Activated CD4-positive, alpha-beta T cell treated with anti-CD3 and anti-CD28 coated beads, Interleukin-2, amount 10 ng/mL, durations not matched to agents 24 days and 14 days (primary cell): ENCODE measurements at regions of chr5 and their contacts with region 1.

Region 1: DNA sequence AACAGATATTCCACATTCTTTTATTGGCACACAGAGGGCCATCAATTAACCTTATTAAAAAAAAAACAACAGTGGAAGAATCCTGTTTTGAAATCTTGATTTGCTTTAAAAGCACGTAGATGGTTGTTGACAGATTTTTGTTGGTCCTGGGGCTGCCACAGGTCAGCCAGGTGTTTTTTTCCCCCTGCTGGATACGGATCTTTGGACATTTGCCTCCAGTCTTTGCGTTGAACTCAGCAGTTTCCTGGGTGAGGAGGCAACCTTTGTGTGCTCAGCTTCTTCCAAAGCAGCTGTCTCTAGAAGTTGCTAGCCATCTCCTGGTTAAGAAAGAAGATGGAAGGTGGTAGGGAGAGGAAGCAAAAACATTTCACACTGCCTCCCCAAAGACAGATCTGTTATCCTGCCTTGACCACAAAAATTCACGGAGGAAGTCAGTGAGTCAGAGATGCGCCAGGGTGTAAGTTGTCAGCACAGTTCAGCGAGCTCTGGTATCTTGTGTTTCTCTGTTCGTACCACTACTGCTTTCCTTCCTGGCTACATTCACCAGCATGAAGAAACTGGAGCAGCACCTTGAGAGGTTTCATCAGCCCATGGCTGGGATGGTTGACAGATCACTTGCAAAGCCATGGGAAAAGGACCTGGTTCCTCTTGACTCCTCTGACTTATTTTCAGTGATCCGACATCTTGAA is 207.3 kb downstream of the ARHGAP26 start:
- DNase-seq: peak; percentile 85
- H3K4me3 Mint-ChIP-seq: peak overlapping the region; percentile 78
- H3K27ac Mint-ChIP-seq: peak overlapping the region; percentile 91
- H3K4me1 Mint-ChIP-seq: peaks cover 55% of the 10 kb centered on the region
- H3K27me3 Mint-ChIP-seq: no peaks in the 10 kb centered on the region

Region 2: GRCh38 chr5:142888469-142889085 is 88.9 kb before region 1 on chr5:
- intact Hi-C with region 1: no loop called
- DNase-seq: peak; percentile 69
- H3K4me3 Mint-ChIP-seq: no peak overlapping the region
- H3K27ac Mint-ChIP-seq: no peak overlapping the region
- H3K4me1 Mint-ChIP-seq: peaks cover 7% of the 10 kb centered on the region
- H3K27me3 Mint-ChIP-seq: no peaks in the 10 kb centered on the region

Region 3: DNA sequence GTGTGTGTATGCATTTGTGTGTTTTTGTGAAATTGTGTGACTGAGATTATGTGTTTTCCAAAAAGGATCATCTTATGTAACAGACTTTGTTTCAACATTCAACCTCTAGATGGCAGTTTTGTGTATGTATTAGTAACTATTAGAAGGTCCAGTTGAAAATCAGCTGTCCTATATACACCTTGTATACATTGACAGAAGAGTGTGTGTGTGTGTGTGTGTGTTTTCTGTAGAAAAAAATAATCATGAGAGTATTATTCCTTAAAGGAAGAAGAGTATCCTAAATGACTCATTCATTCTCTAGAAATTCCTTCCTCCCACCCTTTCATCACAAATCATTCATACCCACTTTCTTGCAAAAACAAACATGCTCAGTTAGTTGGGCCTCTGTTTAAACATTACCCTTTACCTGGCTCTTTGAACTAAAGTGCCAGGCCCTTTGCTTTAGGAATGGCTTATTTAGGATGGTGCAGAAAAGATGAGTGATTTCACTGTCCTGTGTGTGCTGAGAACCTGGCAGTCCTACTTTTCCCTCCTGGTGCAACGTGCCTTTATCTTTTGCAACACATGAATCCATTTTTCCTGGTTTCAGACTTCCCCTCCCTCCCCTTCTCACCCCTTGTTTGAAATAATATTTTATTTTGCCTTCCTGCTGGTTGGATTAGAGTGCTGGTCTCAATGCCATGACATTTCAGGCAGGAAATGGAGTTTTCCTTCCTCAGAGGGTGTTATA is 55.1 kb before region 1 on chr5:
- intact Hi-C with region 1: loop called (anchors 5 kb)
- DNase-seq: no peak
- H3K4me3 Mint-ChIP-seq: no peak overlapping the region
- H3K27ac Mint-ChIP-seq: no peak overlapping the region
- H3K4me1 Mint-ChIP-seq: peaks cover 36% of the 10 kb centered on the region
- H3K27me3 Mint-ChIP-seq: no peaks in the 10 kb centered on the region

Region 4: DNA sequence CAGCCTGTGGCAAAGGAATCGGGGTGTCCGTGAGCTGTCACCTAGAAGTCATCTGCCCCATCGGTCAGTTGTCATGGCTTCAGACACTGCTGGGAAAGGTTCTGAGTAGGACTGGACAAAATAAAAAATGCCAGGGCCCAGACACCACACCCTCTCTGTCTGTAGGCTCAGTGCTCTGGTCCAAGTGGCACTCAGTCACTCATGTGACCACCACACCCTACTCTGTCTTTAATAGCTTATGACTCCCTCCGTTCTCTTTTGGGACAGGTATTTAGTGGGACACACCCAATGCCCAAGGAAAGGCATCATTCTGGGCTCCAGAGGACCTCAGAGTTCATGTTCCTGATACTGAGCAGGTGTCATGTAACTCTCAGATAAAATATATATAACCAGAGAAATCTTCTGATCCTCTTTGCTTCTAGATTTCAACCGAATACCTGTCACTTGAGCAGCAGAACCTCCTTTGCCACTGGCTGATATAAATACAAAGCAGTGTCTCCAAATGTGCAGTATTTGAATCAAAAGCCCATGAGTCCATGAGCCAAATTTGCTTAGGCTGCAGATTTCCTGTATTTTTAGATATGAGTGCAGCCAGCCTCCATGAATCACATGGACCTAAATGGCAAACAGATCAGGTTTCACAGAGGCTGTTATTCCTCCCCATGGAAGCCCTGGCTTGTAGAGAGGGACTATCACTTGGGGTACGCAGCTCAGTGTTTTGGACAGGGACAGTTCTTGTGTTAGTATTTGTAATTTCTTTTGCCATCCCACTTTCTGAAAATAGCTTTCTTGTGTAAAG is 64.7 kb after region 1 on chr5:
- intact Hi-C with region 1: no loop called
- DNase-seq: no peak
- H3K4me3 Mint-ChIP-seq: no peak overlapping the region
- H3K27ac Mint-ChIP-seq: no peak overlapping the region
- H3K4me1 Mint-ChIP-seq: peaks cover 31% of the 10 kb centered on the region
- H3K27me3 Mint-ChIP-seq: no peaks in the 10 kb centered on the region